ENCODE measurements at regions of chr1 and their contacts with region 1.

Region 1: DNA sequence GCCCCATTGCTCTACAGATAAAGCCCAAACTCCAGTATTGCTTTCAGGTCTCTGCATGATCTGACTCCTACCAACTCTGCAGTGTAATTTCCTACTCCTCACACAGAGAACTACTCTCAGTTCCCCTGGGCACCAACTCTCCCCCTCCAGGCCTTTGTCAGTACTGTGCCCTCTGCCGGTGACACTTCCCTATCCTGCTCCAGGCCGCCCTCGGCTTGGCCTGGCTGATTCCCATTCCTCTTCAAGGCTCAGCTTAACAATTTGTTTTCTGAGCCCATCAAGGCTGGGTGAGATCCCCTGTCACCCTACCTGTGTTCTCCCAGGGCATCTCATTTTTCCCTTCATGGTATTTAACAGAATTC is 2.6 kb downstream of the SLAMF8 start:
- H3K4me3 Mint-ChIP-seq: peak overlapping the region; percentile 98
- H3K27ac Mint-ChIP-seq: peak overlapping the region; percentile 99
- H3K4me1 Mint-ChIP-seq: peaks cover 95% of the 10 kb centered on the region
- H3K27me3 Mint-ChIP-seq: no peaks in the 10 kb centered on the region

Region 2: GRCh38 chr1:159780583-159781582 is 48.4 kb before region 1 on chr1 and contains the start of gene DUSP23:
- intact Hi-C with region 1: loop called (anchors 5 kb)
- H3K4me3 Mint-ChIP-seq: peak within 1 kb of the TSS; percentile 80
- H3K27ac Mint-ChIP-seq: peak within 1 kb of the TSS; percentile 82
- H3K4me1 Mint-ChIP-seq: peaks cover 52% of the 10 kb centered on the region
- H3K27me3 Mint-ChIP-seq: no peaks in the 10 kb centered on the region

Region 3: DNA sequence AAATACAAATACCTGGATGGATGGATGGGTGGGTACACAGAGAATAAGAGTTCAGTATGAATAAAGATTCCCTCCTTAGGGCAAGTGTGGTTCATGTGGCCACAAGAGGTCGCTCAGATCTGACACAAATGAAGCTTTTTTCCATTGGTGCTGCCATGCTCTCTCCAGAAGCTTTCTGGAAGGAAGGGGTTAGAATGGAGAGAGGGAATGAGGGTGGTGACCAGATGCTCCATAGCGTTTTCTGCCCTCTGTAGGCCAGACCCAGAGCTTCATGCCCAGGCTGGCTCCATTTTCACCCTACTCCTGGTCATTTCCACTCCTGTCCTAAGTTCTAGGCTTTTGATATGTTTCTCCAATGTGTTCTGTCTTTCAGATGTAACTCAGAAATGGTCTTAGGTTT is 30.4 kb before region 1 on chr1:
- intact Hi-C with region 1: loop called (anchors 1 kb)
- H3K4me3 Mint-ChIP-seq: no peak overlapping the region
- H3K27ac Mint-ChIP-seq: no peak overlapping the region
- H3K4me1 Mint-ChIP-seq: peaks cover 52% of the 10 kb centered on the region
- H3K27me3 Mint-ChIP-seq: peaks cover 13% of the 10 kb centered on the region